Sciatic nerve (tissue), 2 donors: ENCODE measurements at regions of chr6 and their contacts with region 1.

Region 1: GRCh38 chr6:4055420-4056041 is 23.4 kb downstream of the FAM217A start:
- DNase-seq: no peak
- ATAC-seq: peak; percentile 72

Region 2: GRCh38 chr6:4155848-4156466 is 100.4 kb after region 1 on chr6:
- intact Hi-C with region 1: loop called (anchors 10 kb)
- DNase-seq: peak; percentile 81
- ATAC-seq: peak; percentile 88